ENCODE measurements at regions of chr18 and their contacts with region 1.

Region 1: DNA sequence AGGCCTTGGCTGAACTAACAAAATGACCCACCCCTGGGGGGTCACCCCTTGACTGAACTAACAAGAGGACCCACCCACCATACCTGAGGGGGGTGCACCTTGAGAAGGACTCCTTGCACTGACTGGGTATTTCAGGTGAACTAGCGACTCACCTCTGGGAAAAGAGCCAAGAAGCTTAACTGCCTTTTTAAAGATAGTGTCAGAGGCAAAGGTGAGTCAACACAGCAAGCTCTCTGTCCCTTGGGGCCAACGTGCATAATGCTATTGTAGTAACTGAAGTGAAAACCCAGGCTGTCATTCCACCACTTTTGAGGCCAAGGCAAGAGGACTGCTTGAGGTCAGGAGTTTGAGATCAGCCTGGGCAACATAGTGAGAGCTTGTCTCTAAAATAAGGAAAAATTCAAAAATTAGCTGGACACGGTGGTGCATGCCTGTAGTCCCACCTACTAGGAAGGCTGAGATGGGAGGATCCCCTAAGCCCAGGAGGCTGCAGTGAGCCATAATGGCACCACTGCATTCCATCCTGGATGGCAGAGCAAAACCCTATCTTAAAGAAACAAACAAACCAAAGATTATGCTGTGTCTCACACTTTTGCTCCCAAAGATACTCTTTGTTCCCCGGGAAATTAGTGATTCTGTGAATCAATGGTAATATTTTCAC is 36.4 kb upstream of the ZCCHC2 start:
- DNase-seq: peak; percentile 98
- ATAC-seq: peak; percentile 80
- H3K4me3 ChIP-seq: peak overlapping the region; percentile 58
- H3K27ac ChIP-seq: peak overlapping the region; percentile 96
- H3K4me1 ChIP-seq: peaks cover 25% of the 10 kb centered on the region
- H3K27me3 ChIP-seq: no peaks in the 10 kb centered on the region
- CTCF ChIP-seq: no peak

Region 2: DNA sequence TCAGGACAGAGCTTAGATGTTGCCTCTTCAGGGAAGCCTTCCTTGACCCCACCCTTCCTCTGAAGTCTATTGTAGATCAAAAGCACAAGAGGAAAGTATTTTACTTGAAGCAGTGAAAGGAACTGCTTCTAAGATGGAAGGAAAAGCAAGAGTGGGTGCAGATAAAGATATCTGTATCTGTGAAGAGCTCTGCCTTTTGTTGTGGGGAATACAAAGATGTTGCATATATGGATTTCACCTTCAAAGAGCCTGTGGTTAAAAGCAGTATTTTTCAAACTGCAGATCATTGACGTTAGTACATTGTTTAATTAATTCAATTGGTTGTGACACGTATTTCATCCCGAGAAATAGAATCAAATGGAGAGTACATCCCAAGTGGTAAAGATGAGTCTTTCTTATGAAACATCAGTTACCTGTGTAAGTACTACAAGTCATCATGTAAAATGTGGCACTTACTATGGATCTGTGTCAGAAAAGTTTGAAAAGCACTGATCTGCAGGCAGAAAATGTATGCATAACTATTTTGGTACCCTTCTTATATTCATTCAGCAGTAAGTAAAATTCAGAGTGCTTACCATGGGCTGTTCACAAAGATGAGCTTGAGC is 186.0 kb before region 1 on chr18:
- CTCF ChIA-PET with region 1: no interaction called
- POLR2A ChIA-PET with region 1: no interaction called
- intact Hi-C with region 1: no loop called
- DNase-seq: no peak
- ATAC-seq: no peak
- H3K4me3 ChIP-seq: no peak overlapping the region
- H3K27ac ChIP-seq: no peak overlapping the region
- H3K4me1 ChIP-seq: no peaks in the 10 kb centered on the region
- H3K27me3 ChIP-seq: no peaks in the 10 kb centered on the region
- CTCF ChIP-seq: no peak

Region 3: GRCh38 chr18:62312851-62313250 is 173.6 kb before region 1 on chr18:
- CTCF ChIA-PET with region 1: no interaction called
- POLR2A ChIA-PET with region 1: no interaction called
- intact Hi-C with region 1: no loop called
- DNase-seq: no peak
- ATAC-seq: no peak
- H3K4me3 ChIP-seq: no peak overlapping the region
- H3K27ac ChIP-seq: no peak overlapping the region
- H3K4me1 ChIP-seq: no peaks in the 10 kb centered on the region
- H3K27me3 ChIP-seq: no peaks in the 10 kb centered on the region
- CTCF ChIP-seq: no peak

Region 4: DNA sequence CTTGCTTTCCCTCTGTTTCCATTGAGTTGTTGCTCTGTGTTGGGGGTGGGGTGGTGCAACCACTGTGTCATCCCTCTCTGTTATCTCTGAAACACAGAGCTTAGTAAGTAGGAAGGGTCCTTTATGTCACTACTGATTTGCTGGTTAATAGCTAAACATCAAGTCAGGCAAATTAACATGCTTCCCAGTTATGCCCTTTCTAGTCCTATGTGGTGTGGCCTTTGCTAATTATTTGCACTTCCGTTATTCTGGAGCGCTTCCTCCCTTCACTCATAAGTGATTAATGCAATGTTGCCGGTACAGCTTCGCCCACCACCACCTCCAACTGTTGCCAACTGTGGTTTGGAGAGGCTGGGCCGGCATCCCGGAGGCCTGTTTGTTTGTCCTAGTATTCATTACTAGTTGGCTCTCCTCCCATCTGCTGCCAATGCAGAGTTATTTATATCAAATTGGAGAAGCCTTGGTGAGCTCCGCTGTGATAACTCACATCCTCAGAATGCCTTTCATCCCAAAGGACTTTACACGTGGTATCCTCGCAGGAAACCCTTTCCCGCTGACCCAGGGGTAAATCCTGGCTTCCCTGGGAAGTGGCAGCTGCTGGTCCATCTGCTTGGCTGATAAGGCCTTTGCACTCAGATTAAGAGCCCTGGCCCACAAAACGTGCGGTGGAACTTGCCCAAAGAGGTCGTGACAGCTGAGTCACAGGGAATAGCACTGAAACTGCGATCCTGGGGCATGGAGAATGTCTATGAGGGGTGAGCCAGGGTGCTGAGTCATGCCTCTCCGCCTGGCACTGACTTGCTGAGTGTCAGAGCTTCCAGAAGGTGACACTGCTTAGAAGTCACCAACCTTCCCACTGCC is 35.7 kb before region 1 on chr18:
- CTCF ChIA-PET with region 1: no interaction called
- POLR2A ChIA-PET with region 1: no interaction called
- intact Hi-C with region 1: loop called (anchors 2 kb)
- DNase-seq: peak; percentile 93
- ATAC-seq: peak; percentile 96
- H3K4me3 ChIP-seq: peak overlapping the region; percentile 21; the same call in 1 of the 2 replicates
- H3K27ac ChIP-seq: peak overlapping the region; percentile 82
- H3K4me1 ChIP-seq: peaks cover 30% of the 10 kb centered on the region
- H3K27me3 ChIP-seq: no peaks in the 10 kb centered on the region
- CTCF ChIP-seq: no peak

Region 5: GRCh38 chr18:62505669-62506494 is 19.4 kb after region 1 on chr18:
- CTCF ChIA-PET with region 1: no interaction called
- POLR2A ChIA-PET with region 1: no interaction called
- intact Hi-C with region 1: loop called (anchors 2 kb)
- DNase-seq: peak; percentile 27
- ATAC-seq: peak; percentile 54
- H3K4me3 ChIP-seq: peak overlapping the region; percentile 82
- H3K27ac ChIP-seq: no peak overlapping the region
- H3K4me1 ChIP-seq: peaks cover 4% of the 10 kb centered on the region; the same call in 1 of the 2 replicates
- H3K27me3 ChIP-seq: no peaks in the 10 kb centered on the region
- CTCF ChIP-seq: no peak

Measured in PC-3 (cell line).